Endothelial cell of umbilical vein (primary cell): ENCODE measurements at regions of chr2 and their contacts with region 1.

Region 1: GRCh38 chr2:4053769-4054493 is 350.6 kb downstream of the DCDC2C start:
- DNase-seq: peak; percentile 13
- H3K4me3 ChIP-seq: no peak overlapping the region
- H3K27ac ChIP-seq: no peak overlapping the region
- H3K4me1 ChIP-seq: peaks cover 3% of the 10 kb centered on the region
- H3K27me3 ChIP-seq: no peaks in the 10 kb centered on the region
- CTCF ChIP-seq: no peak
- POLR2A ChIP-seq: no peak

Region 2: DNA sequence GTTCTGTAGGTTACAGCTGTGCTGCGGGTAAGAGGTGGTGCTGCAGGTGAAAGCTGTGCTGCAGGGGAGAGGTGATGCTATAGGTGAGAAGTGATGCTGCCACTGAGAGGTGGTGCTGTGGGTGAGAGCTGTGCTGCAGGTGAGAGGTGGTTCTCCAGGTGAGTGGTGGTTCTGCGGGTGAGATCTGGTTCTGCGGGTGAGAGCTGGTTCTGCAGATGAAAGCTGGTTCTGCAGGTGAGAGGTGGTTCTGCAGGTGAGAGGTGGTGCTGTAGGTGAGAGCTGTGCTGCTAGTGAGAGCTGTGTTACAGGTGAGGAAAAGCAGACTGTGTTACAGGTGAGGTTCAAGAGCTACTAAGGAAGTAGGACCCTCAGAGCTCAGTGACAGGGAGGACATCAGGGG is 134.3 kb before region 1 on chr2:
- CTCF ChIA-PET with region 1: no interaction called
- POLR2A ChIA-PET with region 1: no interaction called
- dilution Hi-C with region 1: no loop called
- intact Hi-C with region 1: no loop called
- DNase-seq: no peak
- H3K4me3 ChIP-seq: no peak overlapping the region
- H3K27ac ChIP-seq: no peak overlapping the region
- H3K4me1 ChIP-seq: no peaks in the 10 kb centered on the region
- H3K27me3 ChIP-seq: no peaks in the 10 kb centered on the region
- CTCF ChIP-seq: no peak
- POLR2A ChIP-seq: no peak

Region 3: DNA sequence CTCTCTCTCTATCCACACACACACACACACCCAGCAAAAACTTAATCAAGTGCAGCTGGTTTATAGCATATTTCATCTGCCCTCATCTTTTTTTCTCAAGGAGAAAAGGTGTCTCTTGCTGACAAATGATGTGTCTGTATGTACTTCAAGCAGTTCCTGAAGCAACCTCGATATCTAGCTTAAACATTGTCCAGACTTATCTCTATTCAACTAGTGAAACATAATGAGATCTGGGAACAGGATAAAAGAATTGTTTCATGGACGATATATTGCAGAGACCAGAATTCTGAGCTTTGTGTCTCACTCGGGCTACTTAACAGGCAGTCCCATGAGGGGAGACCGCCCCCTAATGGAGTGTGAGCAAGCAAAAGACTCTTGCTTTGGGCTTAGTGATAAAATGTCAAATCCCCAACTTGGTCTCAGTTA is 709.0 kb after region 1 on chr2:
- CTCF ChIA-PET with region 1: interaction called, 3 read pairs
- POLR2A ChIA-PET with region 1: no interaction called
- dilution Hi-C with region 1: no loop called
- intact Hi-C with region 1: loop called (anchors 10 kb)
- DNase-seq: peak; percentile 58
- H3K4me3 ChIP-seq: no peak overlapping the region
- H3K27ac ChIP-seq: no peak overlapping the region
- H3K4me1 ChIP-seq: no peaks in the 10 kb centered on the region
- H3K27me3 ChIP-seq: no peaks in the 10 kb centered on the region
- CTCF ChIP-seq: peak; percentile 56
- POLR2A ChIP-seq: no peak